ENCODE measurements at regions of chr14 and their contacts with region 1.

Region 1: GRCh38 chr14:34775342-34775741 is 60.9 kb upstream of the CFL2 start:
- DNase-seq: no peak
- ATAC-seq: no peak
- H3K4me3 ChIP-seq: no peak overlapping the region
- H3K27ac ChIP-seq: no peak overlapping the region
- H3K4me1 ChIP-seq: no peaks in the 10 kb centered on the region
- H3K27me3 ChIP-seq: no peaks in the 10 kb centered on the region
- CTCF ChIP-seq: no peak

Region 2: GRCh38 chr14:34665785-34666435 is 109.4 kb before region 1 on chr14:
- CTCF ChIA-PET with region 1: no interaction called
- POLR2A ChIA-PET with region 1: interaction called, 21 read pairs
- in situ Hi-C with region 1: no loop called
- intact Hi-C with region 1: no loop called
- DNase-seq: no peak
- ATAC-seq: no peak
- H3K4me3 ChIP-seq: no peak overlapping the region
- H3K27ac ChIP-seq: no peak overlapping the region
- H3K4me1 ChIP-seq: peaks cover 5% of the 10 kb centered on the region
- H3K27me3 ChIP-seq: no peaks in the 10 kb centered on the region
- CTCF ChIP-seq: no peak

Region 3: GRCh38 chr14:34997762-34998161 is 222.4 kb after region 1 on chr14:
- CTCF ChIA-PET with region 1: no interaction called
- POLR2A ChIA-PET with region 1: no interaction called
- in situ Hi-C with region 1: no loop called
- intact Hi-C with region 1: no loop called
- DNase-seq: no peak
- ATAC-seq: no peak
- H3K4me3 ChIP-seq: no peak overlapping the region
- H3K27ac ChIP-seq: no peak overlapping the region
- H3K4me1 ChIP-seq: no peaks in the 10 kb centered on the region
- H3K27me3 ChIP-seq: no peaks in the 10 kb centered on the region
- CTCF ChIP-seq: no peak

Measured in Panc1 (cell line).